ENCODE measurements at regions of chr19 and their contacts with region 1.

Region 1: DNA sequence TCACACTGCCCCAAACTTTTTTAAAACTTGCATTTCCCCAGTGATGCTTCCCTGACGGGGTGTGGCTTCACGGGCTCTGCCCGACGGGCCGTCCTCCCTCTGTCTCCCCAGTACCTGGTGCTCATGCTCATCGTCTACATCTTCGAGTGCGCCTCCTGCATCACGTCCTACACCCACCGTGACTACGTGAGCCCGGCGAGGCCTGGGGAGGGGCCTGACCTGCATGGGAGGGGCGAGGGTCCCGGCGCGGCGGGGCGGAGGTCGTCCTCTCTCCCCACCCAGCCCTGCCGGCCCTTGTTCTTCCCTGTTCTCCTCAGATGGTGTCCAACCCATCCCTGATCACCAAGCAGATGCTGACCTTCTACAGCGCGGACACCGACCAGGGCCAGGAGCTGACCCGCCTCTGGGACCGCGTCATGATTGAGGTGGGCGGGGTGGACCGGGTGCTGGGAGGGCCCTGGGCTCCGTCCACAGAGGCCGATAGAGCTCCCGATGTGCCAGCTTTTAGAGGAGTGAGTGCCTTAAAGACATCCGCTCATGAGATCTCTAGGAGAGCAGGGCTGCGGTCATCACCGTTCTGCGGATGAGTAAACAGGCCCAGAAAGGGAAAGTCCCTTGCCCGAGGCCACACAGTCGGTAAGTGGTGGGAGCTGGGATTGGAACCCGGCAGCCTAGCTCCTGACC is 6.9 kb downstream of the UPK1A start:
- DNase-seq: peak; percentile 53
- ATAC-seq: peak; percentile 98
- H3K4me3 ChIP-seq: peak overlapping the region; percentile 59 to 65
- H3K27ac ChIP-seq: peak overlapping the region; percentile 61
- H3K4me1 ChIP-seq: peaks cover 2 to 17% of the 10 kb centered on the region in 2 experiments; a peak in 2 of 4 replicates
- H3K27me3 ChIP-seq: peaks cover 5% of the 10 kb centered on the region; the same call in 1 of the 2 replicates
- CTCF ChIP-seq: no peak
- POLR2A ChIP-seq: no peak
- RAD21 ChIP-seq: no peak

Region 2: GRCh38 chr19:35578707-35579106 is 94.6 kb before region 1 on chr19:
- CTCF ChIA-PET with region 1: no interaction called
- POLR2A ChIA-PET with region 1: no interaction called
- RAD21 ChIA-PET with region 1: no interaction called
- intact Hi-C with region 1: no loop called
- DNase-seq: no peak
- ATAC-seq: no peak
- H3K4me3 ChIP-seq: no peak overlapping the region
- H3K27ac ChIP-seq: no peak overlapping the region
- H3K4me1 ChIP-seq: no peaks in the 10 kb centered on the region
- H3K27me3 ChIP-seq: no peaks in the 10 kb centered on the region
- CTCF ChIP-seq: no peak
- POLR2A ChIP-seq: no peak
- RAD21 ChIP-seq: no peak

Region 3: GRCh38 chr19:35648017-35648961 is 25.0 kb before region 1 on chr19 and contains the start of gene COX6B1:
- CTCF ChIA-PET with region 1: interaction called, 3 read pairs
- POLR2A ChIA-PET with region 1: interaction called, 18 read pairs
- RAD21 ChIA-PET with region 1: no interaction called
- intact Hi-C with region 1: no loop called
- DNase-seq: peak; percentile 94
- ATAC-seq: peak; percentile 63
- H3K4me3 ChIP-seq: peak within 1 kb of the TSS; percentile 87 to 95
- H3K27ac ChIP-seq: peak within 1 kb of the TSS; percentile 85
- H3K4me1 ChIP-seq: peaks cover 14 to 41% of the 10 kb centered on the region in 2 experiments; a peak in 3 of 4 replicates
- H3K27me3 ChIP-seq: no peaks in the 10 kb centered on the region
- CTCF ChIP-seq: no peak
- POLR2A ChIP-seq: peak; percentile 88
- RAD21 ChIP-seq: no peak
- total RNA-seq, gene COX6B1: 496 TPM

Region 4: DNA sequence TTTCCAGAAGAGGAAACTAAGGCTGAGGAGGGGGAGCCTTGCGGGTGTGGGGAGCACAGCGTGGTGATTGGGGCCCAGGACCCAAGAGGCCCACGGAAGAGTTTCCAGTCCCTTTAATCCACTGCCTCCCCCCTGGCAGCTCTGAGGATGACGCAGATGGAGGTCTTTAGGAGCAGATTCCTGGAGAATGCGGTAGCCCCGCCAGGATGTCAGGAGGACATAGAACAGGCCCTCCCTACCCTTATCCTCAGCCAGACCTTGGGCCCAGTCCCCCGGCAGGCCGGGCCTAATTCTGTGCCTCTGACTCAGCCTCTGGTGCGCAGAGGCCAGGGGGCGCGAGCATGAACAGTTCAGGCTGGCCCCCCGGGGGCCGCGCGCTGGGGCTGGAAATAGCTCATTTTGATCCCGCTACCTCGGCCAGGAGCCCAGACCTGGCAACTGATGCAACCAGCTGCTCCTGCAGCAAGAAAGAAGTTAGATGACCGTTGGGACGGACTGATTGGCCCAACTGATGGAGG is 84.0 kb after region 1 on chr19:
- CTCF ChIA-PET with region 1: no interaction called
- POLR2A ChIA-PET with region 1: no interaction called
- RAD21 ChIA-PET with region 1: no interaction called
- intact Hi-C with region 1: no loop called
- DNase-seq: no peak
- ATAC-seq: peak; percentile 33
- H3K4me3 ChIP-seq: peak overlapping the region; percentile 92 to 96
- H3K27ac ChIP-seq: peak overlapping the region; percentile 75
- H3K4me1 ChIP-seq: peaks cover 14 to 25% of the 10 kb centered on the region in 2 experiments
- H3K27me3 ChIP-seq: no peaks in the 10 kb centered on the region
- CTCF ChIP-seq: no peak
- POLR2A ChIP-seq: peak; percentile 10
- RAD21 ChIP-seq: no peak

Measured in HCT116 (cell line).